ENCODE measurements at regions of chr2 and their contacts with region 1.

Region 1: GRCh38 chr2:69816923-69817542 is 12.4 kb upstream of the GMCL1 start:
- DNase-seq: peak; percentile 62 to 89
- H3K4me3 ChIP-seq: no peak overlapping the region
- H3K27ac ChIP-seq: no peak overlapping the region
- H3K4me1 ChIP-seq: no peaks in the 10 kb centered on the region
- H3K27me3 ChIP-seq: no peaks in the 10 kb centered on the region
- CTCF ChIP-seq: peak; percentile 85 to 97 (median 92)
- POLR2A ChIP-seq: no peak

Region 2: DNA sequence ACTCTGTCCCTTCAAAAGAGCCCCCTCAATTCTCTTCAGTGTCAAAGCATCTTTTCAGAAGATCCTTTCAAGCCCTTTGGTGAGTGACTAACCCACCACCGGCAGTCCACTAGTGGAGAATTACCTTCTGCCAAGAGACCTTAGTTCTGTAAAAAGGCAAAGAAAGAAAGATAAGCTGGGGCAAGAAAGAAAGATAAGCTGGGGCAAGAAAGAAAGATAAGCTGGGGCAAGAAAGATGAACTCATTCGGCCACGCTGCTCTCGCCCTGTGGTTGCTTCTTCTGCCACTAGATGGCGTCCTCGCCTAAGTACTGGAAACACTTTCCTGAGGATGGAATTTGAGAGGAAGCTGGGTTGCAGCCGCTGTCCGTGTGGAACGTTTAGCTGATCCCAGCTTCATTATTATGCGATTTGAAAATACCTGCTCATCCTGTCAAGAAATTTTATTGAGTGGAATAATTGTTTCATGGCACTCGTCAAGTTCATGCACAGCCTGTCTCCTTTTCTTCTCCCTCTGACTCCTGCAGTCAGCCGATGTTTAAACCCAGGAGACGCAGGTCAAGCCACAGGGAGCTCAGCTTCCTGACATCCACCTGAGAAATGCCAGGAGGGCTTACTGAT is 92.4 kb before region 1 on chr2:
- intact Hi-C with region 1: loop called (anchors 5 kb)
- DNase-seq: peak; percentile 85 to 86
- H3K4me3 ChIP-seq: peak overlapping the region in 1 of 2 donors; percentile 8
- H3K27ac ChIP-seq: no peak overlapping the region
- H3K4me1 ChIP-seq: no peaks in the 10 kb centered on the region
- H3K27me3 ChIP-seq: no peaks in the 10 kb centered on the region
- CTCF ChIP-seq: peak; percentile 92 to 97 (median 96)
- POLR2A ChIP-seq: no peak

Measured in uterus (tissue), 4 donors.